GM23248 (cell line): ENCODE measurements at regions of chrX and their contacts with region 1.

Region 1: DNA sequence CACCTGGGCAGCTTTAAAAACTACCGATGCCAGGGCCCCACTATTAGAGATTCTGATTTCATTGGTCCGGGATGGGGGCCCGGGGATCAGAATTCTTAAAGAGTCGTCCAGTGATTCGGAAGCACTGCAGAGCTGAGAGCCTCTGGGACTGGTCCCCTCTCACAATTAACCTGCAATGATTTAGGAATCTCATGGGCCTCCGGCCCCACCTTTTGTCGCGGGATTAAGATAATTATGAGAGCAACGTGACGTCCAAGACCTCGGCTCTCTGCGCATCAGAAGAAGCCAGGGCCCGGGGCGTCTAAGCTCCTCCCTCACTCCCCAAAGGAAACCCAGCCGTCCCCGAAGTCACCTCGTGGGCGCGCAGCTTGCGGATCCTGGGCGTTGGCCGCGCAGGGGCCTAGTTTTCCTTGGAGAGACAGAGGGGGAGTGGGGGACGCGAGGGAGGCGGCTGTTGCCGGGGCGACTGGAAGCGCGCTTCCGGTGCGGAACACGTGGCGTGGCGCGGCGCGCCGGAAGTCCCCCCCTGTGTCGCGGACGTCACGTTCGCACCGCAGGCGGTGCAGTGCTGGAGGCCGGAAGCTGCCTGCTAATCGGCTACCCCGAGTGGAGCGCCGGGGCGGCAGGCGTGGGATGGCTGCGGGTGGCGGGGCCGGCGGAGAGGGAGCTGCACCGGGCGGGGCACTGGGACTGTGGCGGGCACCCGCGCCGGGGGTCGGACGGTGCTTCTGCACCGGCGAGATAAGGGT is at the start of gene GEMIN8:
- DNase-seq: peak; percentile 88
- H3K4me3 ChIP-seq: peak within 1 kb of the TSS; percentile 89
- H3K27ac ChIP-seq: peak within 1 kb of the TSS; percentile 96
- H3K4me1 ChIP-seq: peaks cover 26% of the 10 kb centered on the region
- H3K27me3 ChIP-seq: no peaks in the 10 kb centered on the region
- total RNA-seq, gene GEMIN8: 12.1 and 13.4 TPM in 2 replicates

Region 2: DNA sequence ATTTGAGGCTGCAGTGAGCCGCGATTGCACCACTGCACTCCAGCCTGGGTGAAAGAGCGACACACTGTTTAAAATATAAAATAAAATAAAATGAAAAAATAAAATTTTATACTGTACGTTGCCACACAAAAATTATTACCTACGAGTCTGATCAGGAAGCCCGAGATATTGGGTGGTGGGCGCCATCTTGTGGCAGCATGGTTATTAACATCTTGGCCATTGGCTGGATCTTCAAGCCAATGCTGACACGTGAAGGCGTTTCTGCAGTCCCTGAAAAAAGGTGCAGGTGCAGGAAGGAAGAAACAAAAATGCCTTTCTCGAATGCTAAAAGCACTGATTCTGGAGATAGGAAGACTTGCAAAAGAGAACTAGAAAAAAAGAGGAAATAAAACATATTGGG is 1128.1 kb before region 1 on chrX:
- in situ Hi-C with region 1: loop called (anchors 25 kb)
- DNase-seq: peak; percentile 49
- H3K4me3 ChIP-seq: no peak overlapping the region
- H3K27ac ChIP-seq: no peak overlapping the region
- H3K4me1 ChIP-seq: no peaks in the 10 kb centered on the region
- H3K27me3 ChIP-seq: no peaks in the 10 kb centered on the region

Region 3: GRCh38 chrX:13515211-13515930 is 514.2 kb before region 1 on chrX:
- in situ Hi-C with region 1: loop called (anchors 10 kb)
- DNase-seq: no peak
- H3K4me3 ChIP-seq: no peak overlapping the region
- H3K27ac ChIP-seq: no peak overlapping the region
- H3K4me1 ChIP-seq: no peaks in the 10 kb centered on the region
- H3K27me3 ChIP-seq: no peaks in the 10 kb centered on the region

Region 4: DNA sequence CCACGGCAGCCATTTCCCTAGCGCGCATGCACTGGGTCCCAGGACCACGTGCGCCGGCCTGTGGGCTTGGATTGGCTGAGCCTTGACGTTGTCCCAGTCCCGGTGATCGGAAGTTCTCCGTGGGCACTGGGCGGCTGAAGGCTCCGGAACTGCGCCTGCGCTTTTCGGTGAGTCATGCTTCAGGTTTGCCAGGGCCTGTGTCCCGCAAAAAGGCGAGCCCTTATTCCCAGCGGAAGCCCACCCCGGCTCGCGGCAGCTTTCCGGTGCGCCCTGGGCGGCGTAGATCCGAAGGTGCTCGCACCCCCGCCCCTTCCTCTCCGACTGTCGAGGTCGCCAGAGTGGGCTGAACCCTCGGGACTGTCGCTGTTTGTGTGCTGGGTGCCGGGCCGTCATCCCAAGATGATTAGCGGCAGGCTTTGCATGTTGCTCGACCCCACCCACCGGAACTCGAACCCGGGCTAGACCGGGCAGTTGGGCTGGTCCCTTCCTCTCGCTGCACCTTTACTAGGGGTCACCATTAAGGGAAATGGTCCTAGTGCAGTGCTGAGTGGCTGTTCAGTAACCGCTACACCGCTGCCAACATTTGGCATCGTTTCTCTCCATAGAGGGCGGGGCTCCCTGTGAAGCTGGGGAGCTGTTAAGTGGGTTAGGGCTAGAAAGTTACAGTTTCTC is 376.4 kb before region 1 on chrX and contains the start of gene TCEANC:
- in situ Hi-C with region 1: loop called (anchors 25 kb)
- DNase-seq: peak; percentile 97
- H3K4me3 ChIP-seq: peak within 1 kb of the TSS; percentile 94
- H3K27ac ChIP-seq: peak within 1 kb of the TSS; percentile 99
- H3K4me1 ChIP-seq: peaks cover 19% of the 10 kb centered on the region; the same call in 1 of the 2 replicates
- H3K27me3 ChIP-seq: no peaks in the 10 kb centered on the region
- total RNA-seq, gene TCEANC: 2.2 and 4.3 TPM in 2 replicates

Region 5: DNA sequence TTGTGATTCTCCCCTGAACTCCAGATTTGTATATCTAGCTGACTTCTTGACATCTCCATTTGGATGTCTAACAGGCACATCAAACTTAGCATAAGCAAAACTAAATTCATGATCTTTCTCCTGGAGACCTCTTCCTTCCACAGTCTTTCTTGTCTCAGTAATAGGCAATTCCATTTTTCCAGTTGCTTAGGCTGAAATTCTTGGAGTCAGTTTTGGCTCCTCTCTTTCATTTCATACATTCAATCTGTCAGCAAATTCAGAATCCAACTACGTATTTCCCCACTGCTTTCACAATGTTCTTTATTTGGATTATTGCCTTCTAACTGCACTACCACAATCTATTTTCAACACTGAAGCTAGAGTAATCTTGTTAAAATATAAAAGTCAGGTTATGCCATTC is 279.8 kb after region 1 on chrX:
- in situ Hi-C with region 1: no loop called
- DNase-seq: no peak
- H3K4me3 ChIP-seq: no peak overlapping the region
- H3K27ac ChIP-seq: no peak overlapping the region
- H3K4me1 ChIP-seq: no peaks in the 10 kb centered on the region
- H3K27me3 ChIP-seq: no peaks in the 10 kb centered on the region